PC-9 (cell line): ENCODE measurements at regions of chr16 and their contacts with region 1.

Region 1: DNA sequence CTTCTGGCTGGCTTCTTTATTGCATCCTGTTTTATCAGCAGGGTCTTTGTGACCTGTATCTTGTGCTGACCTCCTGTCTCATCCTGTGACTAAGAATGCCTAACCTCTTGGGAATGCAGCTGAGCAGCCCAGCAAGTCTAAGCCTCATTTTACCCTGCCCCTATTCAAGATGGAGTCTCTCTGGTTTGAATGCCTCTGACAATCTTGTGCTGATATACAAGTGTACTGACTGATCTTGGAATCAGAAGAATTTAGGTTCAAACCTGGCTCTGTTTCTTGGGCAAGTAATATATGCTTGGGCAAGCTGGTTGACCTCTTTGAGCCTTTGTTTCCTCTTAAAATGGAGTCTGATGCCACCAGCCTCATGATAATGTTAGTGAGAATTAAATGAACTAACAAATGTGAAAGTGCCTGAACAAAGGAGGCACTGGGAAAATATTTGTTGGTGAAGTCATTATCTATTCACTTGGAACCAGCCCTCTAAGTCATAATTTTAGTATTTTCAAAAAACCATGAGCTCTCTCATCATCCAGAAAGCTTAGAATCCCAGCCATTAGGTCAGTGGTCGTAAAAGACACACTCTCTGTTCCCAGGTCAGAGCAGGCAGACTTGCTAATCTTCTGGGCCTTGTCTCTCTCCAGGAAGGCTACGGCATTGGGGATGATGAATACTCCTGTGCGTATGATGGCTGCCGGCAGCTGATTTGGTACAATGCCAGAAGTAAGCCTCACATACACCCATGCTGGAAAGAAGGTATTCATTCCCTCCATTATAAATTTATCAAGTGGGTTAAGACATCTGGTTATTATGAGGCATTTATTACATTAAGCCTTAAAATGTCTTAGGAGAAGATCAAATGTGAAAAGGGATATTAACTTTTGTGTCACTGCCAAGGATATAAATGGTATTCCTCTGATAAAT is 18.1 kb upstream of the ARL2BP start:
- DNase-seq: no peak
- H3K4me3 ChIP-seq: no peak overlapping the region
- H3K27ac ChIP-seq: no peak overlapping the region
- H3K4me1 ChIP-seq: no peaks in the 10 kb centered on the region
- H3K27me3 ChIP-seq: no peaks in the 10 kb centered on the region
- CTCF ChIP-seq: no peak

Region 2: GRCh38 chr16:57204675-57205074 is 22.3 kb before region 1 on chr16:
- CTCF ChIA-PET with region 1: no interaction called
- POLR2A ChIA-PET with region 1: no interaction called
- intact Hi-C with region 1: loop called (anchors 1 kb)
- DNase-seq: no peak
- H3K4me3 ChIP-seq: no peak overlapping the region
- H3K27ac ChIP-seq: no peak overlapping the region
- H3K4me1 ChIP-seq: no peaks in the 10 kb centered on the region
- H3K27me3 ChIP-seq: no peaks in the 10 kb centered on the region
- CTCF ChIP-seq: no peak

Region 3: GRCh38 chr16:57244767-57245471 is 18.0 kb after region 1 on chr16 and contains the start of gene ARL2BP:
- CTCF ChIA-PET with region 1: no interaction called
- POLR2A ChIA-PET with region 1: no interaction called
- intact Hi-C with region 1: no loop called
- DNase-seq: peak; percentile 89 to 98
- H3K4me3 ChIP-seq: peak within 1 kb of the TSS; percentile 78
- H3K27ac ChIP-seq: peak within 1 kb of the TSS; percentile 63
- H3K4me1 ChIP-seq: peaks cover 17% of the 10 kb centered on the region
- H3K27me3 ChIP-seq: no peaks in the 10 kb centered on the region
- CTCF ChIP-seq: no peak
- total RNA-seq, gene ARL2BP: 19.8 and 23.6 TPM in 2 replicates